K562 (cell line): ENCODE measurements at regions of chr12 and their contacts with region 1.

Region 1: DNA sequence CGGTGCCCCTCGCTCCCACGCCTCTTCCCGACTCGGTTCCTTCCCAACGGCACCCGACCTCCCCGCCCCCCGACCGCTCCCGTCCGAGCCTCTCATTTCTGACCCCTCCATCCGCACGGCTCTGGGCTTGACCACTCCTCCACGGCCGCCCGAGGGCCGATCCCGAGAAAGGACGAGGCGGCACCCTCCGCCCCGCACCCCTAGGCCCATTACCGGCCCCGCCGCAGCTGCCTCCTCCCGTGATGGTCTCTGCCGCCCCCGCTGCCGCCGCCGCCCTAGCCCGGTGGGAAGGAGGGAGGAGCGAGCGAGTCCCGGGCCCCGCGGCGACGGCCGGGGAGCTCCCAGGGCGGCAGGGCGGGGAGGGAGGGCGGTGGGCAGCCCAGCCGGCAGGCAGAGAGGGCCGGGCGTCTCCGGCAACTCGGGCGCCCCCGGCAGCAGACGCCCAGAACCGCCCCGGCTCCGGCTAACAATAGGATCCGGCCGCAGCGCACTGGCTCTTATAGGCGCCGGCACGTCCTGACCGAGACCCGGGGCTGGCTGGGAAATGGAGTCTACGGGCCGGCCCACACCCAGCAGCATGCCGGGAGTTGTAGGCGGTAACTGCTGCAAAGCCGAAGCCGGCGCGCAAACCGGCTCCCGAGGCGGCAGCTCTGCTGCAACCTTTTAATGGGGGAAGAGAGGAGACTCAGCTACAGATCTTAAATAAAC is at the start of gene CSRNP2:
- DNase-seq: peak; percentile 93 to 97 (median 95)
- ATAC-seq: peak; percentile 100
- H3K4me3 ChIP-seq: peak within 1 kb of the TSS; percentile 99
- H3K27ac ChIP-seq: peak within 1 kb of the TSS; percentile 82
- H3K4me1 ChIP-seq: peaks cover 14 to 17% of the 10 kb centered on the region in 2 experiments; a peak in 3 of 5 replicates
- H3K27me3 ChIP-seq: no peaks in the 10 kb centered on the region; a peak in 1 of 5 replicates
- CTCF ChIP-seq: peak in 1 of 3 experiments; percentile 23; a peak in 3 of 6 replicates
- EP300 ChIP-seq: no peak
- POLR2A ChIP-seq: peak; percentile 93
- RAD21 ChIP-seq: no peak
- polyA plus RNA-seq, gene CSRNP2: 1.6 to 1.8 TPM

Region 2: DNA sequence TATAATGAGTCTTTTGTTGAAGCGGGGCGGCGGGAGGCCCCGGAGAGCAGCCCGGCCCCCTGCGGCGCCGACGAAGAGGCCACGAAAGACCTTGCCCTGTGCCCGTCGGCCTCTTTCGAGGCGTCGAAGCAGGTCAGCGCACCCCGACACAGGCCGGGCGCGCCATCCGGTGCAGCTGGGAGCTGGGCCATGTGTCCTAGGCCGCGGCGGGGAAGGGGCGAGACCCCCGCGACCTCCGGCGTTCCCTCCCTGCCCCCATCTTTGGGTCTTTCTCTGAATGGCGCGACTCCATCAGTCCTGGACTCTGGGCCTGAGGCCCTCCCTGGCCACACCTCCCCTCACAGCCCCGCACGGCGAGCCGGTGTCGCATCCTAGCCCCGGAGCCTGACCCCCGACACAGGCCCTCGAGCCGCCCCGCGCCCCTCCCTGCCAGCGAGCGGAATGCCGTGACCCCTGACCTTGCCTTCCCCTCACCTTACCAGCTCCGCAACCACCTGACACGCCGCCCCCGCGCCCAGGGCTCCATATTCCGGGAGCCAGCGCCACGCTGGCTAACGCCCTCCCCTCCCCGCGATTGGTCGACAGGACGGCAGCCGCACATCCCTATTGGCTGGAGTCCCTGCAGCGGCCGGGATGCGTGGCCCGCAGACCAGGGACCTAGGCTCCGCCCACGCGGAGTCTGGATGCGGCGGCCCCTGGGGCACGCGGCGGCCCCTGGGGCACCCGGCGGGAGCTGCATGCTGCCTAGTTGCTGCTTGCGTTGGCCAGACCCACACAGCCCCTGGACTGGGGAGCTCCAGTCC is 57.2 kb before region 1 on chr12 and contains the start of gene SLC11A2:
- CTCF ChIA-PET with region 1: no interaction called
- POLR2A ChIA-PET with region 1: interaction called, 12 read pairs
- in situ Hi-C with region 1: no loop called
- intact Hi-C with region 1: no loop called
- DNase-seq: peak; percentile 98 to 99 (median 98)
- ATAC-seq: peak; percentile 91
- H3K4me3 ChIP-seq: peak within 1 kb of the TSS; percentile 66
- H3K27ac ChIP-seq: peak within 1 kb of the TSS; percentile 91
- H3K4me1 ChIP-seq: peaks cover 32 to 38% of the 10 kb centered on the region in 2 experiments
- H3K27me3 ChIP-seq: no peaks in the 10 kb centered on the region
- CTCF ChIP-seq: peak; percentile 18 to 28 (median 18); a peak in 3 of 6 replicates
- EP300 ChIP-seq: no peak; the same call in 1 of the 2 replicates
- POLR2A ChIP-seq: peak; percentile 83
- RAD21 ChIP-seq: peak in 1 of 2 experiments; percentile 12; a peak in 1 of 4 replicates
- polyA plus RNA-seq, gene SLC11A2: 21.1 to 27.6 TPM

Region 3: DNA sequence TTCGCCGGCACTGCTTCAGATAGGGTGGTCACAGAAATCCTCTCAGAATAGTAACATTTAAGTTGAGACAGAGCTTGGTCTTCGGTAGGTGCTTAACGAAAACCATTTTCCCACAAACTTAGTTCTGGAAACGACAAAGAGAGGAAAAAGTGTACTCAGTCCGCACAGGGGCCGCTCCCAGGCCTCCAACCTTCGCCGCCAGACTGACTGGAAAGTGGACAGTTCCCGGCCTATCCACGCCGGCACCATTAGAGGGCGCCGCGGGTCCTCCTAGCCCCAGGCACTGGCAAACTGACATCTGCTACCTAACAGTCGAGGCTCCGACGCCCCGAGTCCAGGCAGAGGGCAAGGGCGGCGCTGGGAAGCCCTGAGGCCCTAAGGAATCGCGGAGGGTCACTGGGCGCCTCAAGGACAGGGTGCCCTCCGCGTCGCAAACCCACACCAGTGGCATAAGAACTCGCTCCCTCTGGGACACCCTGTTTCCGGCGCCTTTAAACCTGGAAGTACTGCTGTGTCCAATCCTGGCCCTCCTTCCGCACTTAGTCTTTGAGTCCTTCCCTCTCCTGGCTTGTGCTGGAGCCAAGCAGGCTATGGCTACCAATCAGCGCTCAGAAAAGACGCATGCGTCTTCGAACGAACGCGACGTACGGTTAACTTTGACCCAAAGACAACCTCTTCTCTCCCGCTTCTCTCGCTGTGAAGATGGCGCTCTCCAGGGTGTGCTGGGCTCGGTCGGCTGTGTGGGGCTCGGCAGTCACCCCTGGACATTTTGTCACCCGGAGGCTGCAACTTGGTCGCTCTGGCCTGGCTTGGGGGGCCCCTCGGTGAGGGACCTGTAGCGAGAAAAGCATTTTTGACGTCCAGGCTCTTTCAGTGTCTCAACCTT is 35.4 kb before region 1 on chr12 and contains the start of gene LETMD1:
- CTCF ChIA-PET with region 1: no interaction called
- POLR2A ChIA-PET with region 1: interaction called, 10 read pairs
- in situ Hi-C with region 1: no loop called
- intact Hi-C with region 1: loop called (anchors 2 kb)
- DNase-seq: peak; percentile 85 to 98 (median 90)
- ATAC-seq: peak; percentile 98
- H3K4me3 ChIP-seq: peak within 1 kb of the TSS; percentile 59
- H3K27ac ChIP-seq: peak within 1 kb of the TSS; percentile 96
- H3K4me1 ChIP-seq: peaks cover 4 to 10% of the 10 kb centered on the region in 2 experiments; a peak in 4 of 5 replicates
- H3K27me3 ChIP-seq: no peaks in the 10 kb centered on the region
- CTCF ChIP-seq: peak; percentile 90 to 95 (median 93)
- EP300 ChIP-seq: no peak
- POLR2A ChIP-seq: peak; percentile 96
- RAD21 ChIP-seq: peak; percentile 81 to 84
- polyA plus RNA-seq, gene LETMD1: 58.7 to 75.4 TPM

Region 4: GRCh38 chr12:51056244-51056643 is 27.0 kb before region 1 on chr12:
- CTCF ChIA-PET with region 1: no interaction called
- POLR2A ChIA-PET with region 1: interaction called, 11 read pairs
- in situ Hi-C with region 1: no loop called
- intact Hi-C with region 1: no loop called
- DNase-seq: no peak
- ATAC-seq: no peak
- H3K4me3 ChIP-seq: no peak overlapping the region
- H3K27ac ChIP-seq: no peak overlapping the region
- H3K4me1 ChIP-seq: no peaks in the 10 kb centered on the region
- H3K27me3 ChIP-seq: no peaks in the 10 kb centered on the region
- CTCF ChIP-seq: no peak
- EP300 ChIP-seq: no peak
- POLR2A ChIP-seq: no peak
- RAD21 ChIP-seq: no peak

Region 5: DNA sequence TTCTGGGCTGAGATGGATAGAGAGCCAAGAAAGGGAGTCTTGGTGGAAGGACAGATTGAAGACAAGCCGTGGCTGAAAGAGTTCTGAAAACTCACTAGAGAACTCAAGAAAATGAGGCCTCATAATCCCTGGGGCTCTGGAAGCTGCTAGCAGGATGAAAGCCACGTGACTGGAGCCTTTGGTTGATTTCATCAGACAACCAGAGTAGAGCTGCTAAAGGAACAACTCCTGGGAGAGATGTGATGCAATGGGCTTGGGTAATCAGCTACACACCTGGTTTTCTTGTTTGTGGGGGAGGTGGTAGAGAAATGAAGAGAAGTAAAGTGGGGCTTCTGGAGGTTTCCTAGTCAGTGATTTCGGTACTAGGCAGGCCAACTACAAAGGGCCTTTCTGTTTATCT is 13.3 kb before region 1 on chr12:
- CTCF ChIA-PET with region 1: no interaction called
- POLR2A ChIA-PET with region 1: interaction called, 25 read pairs
- in situ Hi-C with region 1: no loop called
- intact Hi-C with region 1: no loop called
- DNase-seq: peak in 1 of 4 experiments; percentile 45
- ATAC-seq: peak; percentile 85
- H3K4me3 ChIP-seq: no peak overlapping the region
- H3K27ac ChIP-seq: no peak overlapping the region
- H3K4me1 ChIP-seq: peaks cover 7 to 14% of the 10 kb centered on the region in 2 experiments; a peak in 3 of 5 replicates
- H3K27me3 ChIP-seq: no peaks in the 10 kb centered on the region
- CTCF ChIP-seq: no peak
- EP300 ChIP-seq: 0 out of 2 replicates have a peak, but pooled peaks have one; percentile 39
- POLR2A ChIP-seq: no peak
- RAD21 ChIP-seq: peak in 1 of 2 experiments; percentile 18; a peak in 2 of 4 replicates

Region 6: GRCh38 chr12:51217968-51218606 is 134.8 kb after region 1 on chr12 and contains the start of gene POU6F1:
- CTCF ChIA-PET with region 1: no interaction called
- POLR2A ChIA-PET with region 1: interaction called, 13 read pairs
- in situ Hi-C with region 1: no loop called
- intact Hi-C with region 1: loop called (anchors 1 kb)
- DNase-seq: peak; percentile 90 to 93 (median 93)
- ATAC-seq: peak; percentile 90
- H3K4me3 ChIP-seq: peak within 1 kb of the TSS; percentile 71
- H3K27ac ChIP-seq: peak within 1 kb of the TSS; percentile 90
- H3K4me1 ChIP-seq: peaks cover 21 to 22% of the 10 kb centered on the region in 2 experiments; a peak in 4 of 5 replicates
- H3K27me3 ChIP-seq: no peaks in the 10 kb centered on the region
- CTCF ChIP-seq: peak; percentile 37 to 63 (median 52); a peak in 4 of 6 replicates
- EP300 ChIP-seq: no peak
- POLR2A ChIP-seq: peak; percentile 72
- RAD21 ChIP-seq: 0 out of 4 replicates have a peak, but pooled peaks of 1 of the 2 experiments have one; percentile 17
- polyA plus RNA-seq, gene POU6F1: 0.14 to 0.25 TPM

Region 7: DNA sequence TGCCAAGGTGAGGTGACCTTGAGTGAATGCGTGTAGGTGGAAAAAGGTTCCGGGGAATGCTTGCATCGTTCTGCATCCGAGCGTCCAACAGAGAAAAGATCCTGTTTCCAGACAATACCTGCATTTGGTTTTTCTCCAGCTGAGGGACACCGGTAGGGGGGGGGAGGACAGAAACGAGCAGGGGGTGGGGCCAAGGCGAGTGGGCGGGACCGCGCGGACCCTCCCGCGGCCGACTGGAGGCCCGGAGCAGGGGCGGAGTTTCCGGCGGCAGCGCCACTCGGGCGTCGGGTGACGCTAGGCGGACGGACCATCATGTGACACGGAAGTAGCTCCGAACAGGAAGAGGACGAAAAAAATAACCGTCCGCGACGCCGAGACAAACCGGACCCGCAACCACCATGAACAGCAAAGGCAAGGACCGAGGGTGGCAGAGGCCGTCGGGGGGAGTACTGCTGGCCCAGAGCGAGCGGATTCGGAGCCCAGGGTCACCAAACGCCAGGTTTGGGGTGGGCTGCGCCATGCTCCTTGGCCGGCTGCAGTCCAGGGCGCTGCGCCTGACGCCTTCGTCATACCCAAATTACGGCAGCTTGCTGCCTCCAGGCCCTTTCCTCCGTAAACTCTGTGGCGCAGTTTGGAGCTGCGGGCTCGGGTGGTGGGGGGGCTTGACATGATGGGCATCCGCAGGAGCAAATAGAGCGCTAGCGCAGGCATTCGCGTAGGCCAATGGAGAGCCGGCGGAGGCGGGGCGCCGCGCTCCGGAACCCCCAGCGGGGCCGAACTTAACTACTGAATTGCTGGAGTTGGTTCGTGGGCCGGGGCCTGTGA is 155.4 kb after region 1 on chr12 and contains the start of gene DAZAP2:
- CTCF ChIA-PET with region 1: no interaction called
- POLR2A ChIA-PET with region 1: interaction called, 10 read pairs
- in situ Hi-C with region 1: no loop called
- intact Hi-C with region 1: no loop called
- DNase-seq: peak; percentile 96 to 99 (median 98)
- ATAC-seq: peak; percentile 98
- H3K4me3 ChIP-seq: peak within 1 kb of the TSS; percentile 93
- H3K27ac ChIP-seq: peak within 1 kb of the TSS; percentile 100
- H3K4me1 ChIP-seq: peaks cover 4 to 22% of the 10 kb centered on the region in 2 experiments; a peak in 4 of 5 replicates
- H3K27me3 ChIP-seq: no peaks in the 10 kb centered on the region
- CTCF ChIP-seq: peak in 2 of 3 experiments; percentile 14 to 18; a peak in 2 of 6 replicates
- EP300 ChIP-seq: peak; percentile 41; the same call in 1 of the 2 replicates
- POLR2A ChIP-seq: peak; percentile 95
- RAD21 ChIP-seq: no peak
- polyA plus RNA-seq, gene DAZAP2: 364 to 668 TPM